ENCODE measurements at regions of chr1 and their contacts with region 1.

Region 1: GRCh38 chr1:108897865-108898720 is 21.3 kb downstream of the GPSM2 start:
- DNase-seq: peak; percentile 22
- H3K4me3 Mint-ChIP-seq: no peak overlapping the region
- H3K27ac Mint-ChIP-seq: no peak overlapping the region
- H3K4me1 Mint-ChIP-seq: peaks cover 3% of the 10 kb centered on the region
- H3K27me3 Mint-ChIP-seq: no peaks in the 10 kb centered on the region
- CTCF ChIP-seq: peak; percentile 22

Region 2: DNA sequence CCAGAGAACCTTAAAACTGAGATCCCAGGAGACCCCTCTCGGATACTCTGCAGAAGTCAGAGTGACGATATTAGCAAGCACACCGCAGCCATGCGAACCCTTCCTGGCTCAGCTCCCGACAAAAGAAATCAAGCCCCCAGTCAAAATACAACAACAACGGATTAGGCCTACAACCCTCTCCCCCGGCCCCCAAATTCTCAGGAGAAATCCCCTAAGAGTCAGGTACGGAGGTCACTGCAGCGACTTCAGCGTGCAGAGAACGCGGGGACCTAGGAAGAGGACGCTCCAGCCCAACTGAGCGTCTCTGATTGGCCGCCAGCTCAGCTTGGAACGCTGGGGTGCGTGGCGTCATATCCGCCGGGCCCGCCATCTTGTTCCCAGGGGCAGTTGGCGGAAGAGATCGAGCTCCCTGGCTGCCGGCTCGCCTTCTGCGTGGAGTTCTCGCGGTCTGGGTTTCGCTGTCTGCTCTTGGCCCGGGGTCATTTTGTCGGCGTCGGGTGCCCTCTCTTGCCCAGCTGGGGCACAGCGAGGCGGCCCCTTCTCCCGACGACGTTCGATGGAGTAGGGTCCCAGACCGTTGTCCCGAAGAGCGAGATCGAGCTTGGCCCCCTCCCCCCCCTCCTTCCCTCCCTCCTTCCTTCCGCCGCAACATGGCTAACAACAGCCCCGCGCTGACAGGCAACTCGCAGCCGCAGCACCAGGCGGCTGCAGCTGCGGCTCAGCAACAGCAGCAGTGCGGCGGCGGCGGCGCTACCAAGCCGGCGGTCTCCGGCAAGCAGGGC is 206.0 kb before region 1 on chr1 and contains the start of gene PRPF38B:
- CTCF ChIA-PET with region 1: no interaction called
- intact Hi-C with region 1: loop called (anchors 10 kb)
- DNase-seq: peak; percentile 87
- H3K4me3 Mint-ChIP-seq: peak within 1 kb of the TSS; percentile 92
- H3K27ac Mint-ChIP-seq: peak within 1 kb of the TSS; percentile 76
- H3K4me1 Mint-ChIP-seq: peaks cover 16% of the 10 kb centered on the region
- H3K27me3 Mint-ChIP-seq: no peaks in the 10 kb centered on the region
- CTCF ChIP-seq: no peak
- total RNA-seq, gene PRPF38B: 45.7 and 47.6 TPM in 2 replicates

Region 3: GRCh38 chr1:108828022-108828961 is 69.8 kb before region 1 on chr1:
- CTCF ChIA-PET with region 1: interaction called, 5 read pairs
- intact Hi-C with region 1: loop called (anchors 1 kb)
- DNase-seq: peak; percentile 74
- H3K4me3 Mint-ChIP-seq: no peak overlapping the region
- H3K27ac Mint-ChIP-seq: no peak overlapping the region
- H3K4me1 Mint-ChIP-seq: peaks cover 24% of the 10 kb centered on the region
- H3K27me3 Mint-ChIP-seq: no peaks in the 10 kb centered on the region
- CTCF ChIP-seq: peak; percentile 78

Measured in Calu3 (cell line).